ENCODE measurements at regions of chr13 and their contacts with region 1.

Region 1: GRCh38 chr13:77779552-77780272 is 82.2 kb downstream of the SLAIN1 start:
- DNase-seq: peak in 1 of 2 donors; percentile 52
- ATAC-seq: peak; percentile 72
- H3K4me3 ChIP-seq: no peak overlapping the region
- H3K27ac ChIP-seq: no peak overlapping the region
- H3K4me1 ChIP-seq: no peaks in the 10 kb centered on the region
- H3K27me3 ChIP-seq: no peaks in the 10 kb centered on the region

Region 2: DNA sequence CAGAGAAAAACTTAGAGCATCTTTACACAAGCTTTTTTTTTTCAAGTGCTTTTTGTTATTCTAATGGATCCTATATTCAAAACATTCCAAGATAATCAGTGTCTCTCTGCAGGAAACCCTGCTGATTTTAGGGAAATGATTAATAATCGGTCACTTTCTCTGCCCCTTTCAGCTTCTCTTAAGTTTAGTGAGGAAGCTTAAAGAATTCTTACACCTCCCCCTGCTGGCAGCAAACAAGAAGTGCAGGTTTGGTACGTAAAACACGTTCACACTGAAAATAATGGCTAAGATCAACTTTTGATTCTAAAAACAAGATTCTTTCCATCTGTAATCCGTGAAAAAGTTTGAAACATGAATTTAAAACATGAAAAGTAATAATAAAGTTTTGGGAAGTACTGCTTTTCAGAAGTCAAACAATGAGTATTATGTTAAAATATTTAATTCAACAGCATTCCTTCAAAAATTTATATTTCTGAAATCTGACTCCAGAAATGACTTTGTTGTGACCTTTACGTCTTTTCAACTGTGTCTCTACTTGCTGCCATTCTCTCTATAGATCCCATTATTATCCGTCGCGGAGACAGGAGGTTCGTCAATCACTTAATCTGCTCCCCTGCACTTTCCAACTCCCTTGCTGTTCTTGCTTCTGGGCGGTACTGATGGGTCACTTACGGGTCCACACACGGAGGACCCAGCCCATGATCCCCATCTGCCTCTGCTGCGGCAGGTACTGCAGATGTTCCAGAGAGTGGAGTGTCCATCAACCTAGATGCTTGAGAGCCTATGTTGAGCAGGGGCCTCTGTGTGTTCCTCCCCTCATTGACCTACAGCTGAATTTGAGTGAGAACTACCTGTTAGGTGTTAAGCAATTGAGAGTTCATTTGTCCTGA is 342.0 kb after region 1 on chr13:
- intact Hi-C with region 1: loop called (anchors 5 kb)
- DNase-seq: no peak
- ATAC-seq: peak; percentile 72
- H3K4me3 ChIP-seq: no peak overlapping the region
- H3K27ac ChIP-seq: no peak overlapping the region
- H3K4me1 ChIP-seq: no peaks in the 10 kb centered on the region
- H3K27me3 ChIP-seq: peaks cover 0 to 2% of the 10 kb centered on the region in 2 donors